Activated naive CD4-positive, alpha-beta T cell treated with anti-CD3 and anti-CD28 coated beads, Interleukin-2, amount 10 ng/mL, durations not matched to agents 7 days and 5 days (primary cell): ENCODE measurements at regions of chr1 and their contacts with region 1.

Region 1: DNA sequence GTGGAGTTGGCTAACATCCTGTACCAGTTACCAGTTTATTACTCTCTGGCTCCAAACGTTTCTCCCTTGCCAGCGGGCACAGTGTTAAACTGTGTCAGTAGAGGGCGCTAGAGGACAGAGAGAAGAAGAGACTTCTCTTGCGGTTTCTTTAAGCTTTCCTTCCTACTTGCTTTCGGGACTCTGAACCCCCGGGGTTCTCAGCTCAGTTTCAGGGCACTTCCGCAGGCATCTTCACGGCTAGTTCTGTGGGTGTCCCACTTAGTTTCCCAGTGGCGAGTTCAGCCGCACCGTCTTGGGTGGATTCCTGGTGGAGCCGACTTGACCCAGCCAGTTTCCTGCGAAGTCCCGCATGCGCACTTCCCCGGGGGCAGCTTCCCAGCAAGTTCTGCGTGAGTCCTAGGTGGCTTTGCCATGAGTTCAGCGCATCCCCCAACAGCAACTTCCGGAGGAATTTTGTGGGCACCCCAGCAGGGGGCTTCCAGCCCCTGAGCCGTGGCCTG is 37.9 kb upstream of the BTG2 start:
- DNase-seq: peak; percentile 90
- H3K4me3 Mint-ChIP-seq: peak overlapping the region; percentile 72
- H3K27ac Mint-ChIP-seq: peak overlapping the region; percentile 19
- H3K4me1 Mint-ChIP-seq: peaks cover 24% of the 10 kb centered on the region
- H3K27me3 Mint-ChIP-seq: peaks cover 10% of the 10 kb centered on the region

Region 2: DNA sequence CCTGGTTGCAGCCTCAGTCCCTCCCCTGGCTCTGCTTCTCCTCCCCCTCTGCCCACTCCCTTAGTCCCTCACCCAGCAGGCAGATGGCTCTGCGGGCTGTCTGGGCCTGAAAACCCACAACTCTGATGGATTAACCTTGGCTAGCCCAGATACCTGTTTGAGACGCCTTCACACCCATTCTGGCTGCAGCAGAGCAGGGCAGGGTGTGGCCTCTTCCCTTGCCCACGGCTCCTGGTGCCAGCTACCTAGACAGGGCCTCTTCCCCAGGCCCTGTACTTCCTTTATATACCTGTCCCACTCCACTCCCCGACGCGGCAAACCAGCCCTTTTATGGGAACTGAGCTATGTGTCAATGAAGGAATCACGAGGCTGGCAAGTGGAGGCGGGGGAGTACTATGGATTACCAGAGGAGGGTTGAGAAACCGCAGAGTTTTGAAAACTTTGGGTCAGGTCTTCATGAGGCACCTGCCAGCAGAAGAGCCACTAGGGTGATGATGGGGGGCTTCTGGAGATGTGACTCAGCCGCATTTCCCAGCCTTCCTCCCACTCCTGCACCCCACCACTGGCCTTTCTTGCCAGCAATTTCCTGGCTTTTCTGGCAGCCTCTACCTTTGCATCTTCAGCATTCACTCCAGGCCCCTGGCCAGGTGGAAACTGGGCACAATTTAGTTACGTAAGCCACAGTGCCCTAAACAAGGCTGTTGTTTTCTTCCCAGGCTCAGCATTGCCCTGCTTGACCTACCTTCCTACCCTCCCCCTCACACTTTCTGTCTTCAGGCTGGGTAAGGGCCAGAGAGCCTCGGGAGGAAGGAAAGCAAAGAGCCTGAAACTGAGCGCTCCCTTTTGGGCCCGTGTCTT is 80.7 kb before region 1 on chr1 and contains the start of gene CHI3L1:
- CTCF ChIA-PET with region 1: no interaction called
- DNase-seq: no peak
- H3K4me3 Mint-ChIP-seq: no peak within 1 kb of the TSS
- H3K27ac Mint-ChIP-seq: no peak within 1 kb of the TSS
- H3K4me1 Mint-ChIP-seq: no peaks in the 10 kb centered on the region
- H3K27me3 Mint-ChIP-seq: peaks cover 22% of the 10 kb centered on the region

Region 3: GRCh38 chr1:203216274-203217138 is 50.9 kb before region 1 on chr1:
- CTCF ChIA-PET with region 1: interaction called, 15 read pairs
- DNase-seq: peak; percentile 66
- H3K4me3 Mint-ChIP-seq: no peak overlapping the region
- H3K27ac Mint-ChIP-seq: no peak overlapping the region
- H3K4me1 Mint-ChIP-seq: no peaks in the 10 kb centered on the region
- H3K27me3 Mint-ChIP-seq: peaks cover 56% of the 10 kb centered on the region

Region 4: DNA sequence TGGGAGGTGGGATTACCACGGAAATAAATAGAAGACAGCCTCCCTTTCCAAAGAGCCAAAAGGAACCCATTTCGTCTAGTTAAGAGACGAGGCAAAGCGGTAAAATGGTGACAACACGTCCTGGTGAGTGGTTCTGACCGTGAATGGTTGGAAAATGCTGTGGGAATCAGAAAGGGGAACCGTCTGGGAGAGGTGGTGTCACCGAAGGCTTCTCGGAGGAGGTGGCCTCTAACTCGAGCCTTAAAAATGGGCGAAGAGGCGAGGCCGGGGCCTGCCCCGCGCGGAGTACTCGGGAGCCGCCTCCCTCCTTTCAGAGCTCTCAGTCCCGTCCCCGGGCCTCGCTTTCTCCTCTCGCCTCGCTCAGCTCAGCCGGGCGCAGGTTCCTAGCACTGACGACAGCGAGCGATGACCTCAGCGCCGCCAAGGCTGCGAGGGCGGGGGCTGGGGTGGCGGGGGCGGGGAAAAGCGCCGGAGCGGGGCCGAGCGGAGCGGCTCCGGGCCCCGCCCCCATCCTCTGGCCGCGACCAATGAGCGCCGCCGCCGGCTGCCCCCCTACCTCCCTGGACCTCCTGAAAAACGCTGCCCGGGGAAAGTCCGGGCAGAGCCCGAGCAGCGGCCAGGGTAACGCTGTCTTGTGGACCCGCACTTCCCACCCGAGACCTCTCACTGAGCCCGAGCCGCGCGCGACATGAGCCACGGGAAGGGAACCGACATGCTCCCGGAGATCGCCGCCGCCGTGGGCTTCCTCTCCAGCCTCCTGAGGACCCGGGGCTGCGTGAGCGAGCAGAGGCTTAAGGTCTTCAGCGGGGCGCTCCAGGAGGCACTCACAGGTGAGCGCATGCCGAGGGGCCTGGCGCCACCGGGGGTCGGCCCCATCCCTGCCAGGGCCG is 37.8 kb after region 1 on chr1 and contains the start of gene BTG2:
- CTCF ChIA-PET with region 1: interaction called, 94 read pairs
- DNase-seq: peak; percentile 94
- H3K4me3 Mint-ChIP-seq: peak within 1 kb of the TSS; percentile 86
- H3K27ac Mint-ChIP-seq: peak within 1 kb of the TSS; percentile 90
- H3K4me1 Mint-ChIP-seq: peaks cover 61% of the 10 kb centered on the region
- H3K27me3 Mint-ChIP-seq: no peaks in the 10 kb centered on the region

Region 5: GRCh38 chr1:203475012-203475981 is 207.9 kb after region 1 on chr1 and contains the start of gene PRELP:
- CTCF ChIA-PET with region 1: interaction called, 23 read pairs
- DNase-seq: no peak
- H3K4me3 Mint-ChIP-seq: no peak within 1 kb of the TSS
- H3K27ac Mint-ChIP-seq: no peak within 1 kb of the TSS
- H3K4me1 Mint-ChIP-seq: no peaks in the 10 kb centered on the region
- H3K27me3 Mint-ChIP-seq: peaks cover 69% of the 10 kb centered on the region

Region 6: GRCh38 chr1:203493901-203494300 is 226.5 kb after region 1 on chr1 and contains the start of gene OPTC:
- CTCF ChIA-PET with region 1: interaction called, 134 read pairs
- DNase-seq: no peak
- H3K4me3 Mint-ChIP-seq: no peak within 1 kb of the TSS
- H3K27ac Mint-ChIP-seq: no peak within 1 kb of the TSS
- H3K4me1 Mint-ChIP-seq: peaks cover 3% of the 10 kb centered on the region
- H3K27me3 Mint-ChIP-seq: peaks cover 42% of the 10 kb centered on the region